SK-N-SH (cell line): ENCODE measurements at regions of chr6 and their contacts with region 1.

Region 1: GRCh38 chr6:153231048-153231646 is 100.1 kb upstream of the RGS17 start:
- DNase-seq: peak; percentile 51
- H3K4me3 ChIP-seq: peak overlapping the region in 1 of 2 experiments; percentile 51; a peak in 1 of 4 replicates
- H3K27ac ChIP-seq: no peak overlapping the region
- H3K4me1 ChIP-seq: peaks cover 0 to 3% of the 10 kb centered on the region in 2 experiments; a peak in 3 of 4 replicates
- H3K27me3 ChIP-seq: no peaks in the 10 kb centered on the region
- CTCF ChIP-seq: peak; percentile 77
- EP300 ChIP-seq: no peak
- RAD21 ChIP-seq: peak; percentile 98

Region 2: GRCh38 chr6:153117986-153118879 is 112.9 kb before region 1 on chr6:
- CTCF ChIA-PET with region 1: no interaction called
- POLR2A ChIA-PET with region 1: no interaction called
- DNase-seq: no peak
- H3K4me3 ChIP-seq: no peak overlapping the region
- H3K27ac ChIP-seq: peak overlapping the region in 1 of 2 experiments; percentile 72; a peak in 2 of 4 replicates
- H3K4me1 ChIP-seq: peaks cover 0 to 5% of the 10 kb centered on the region in 2 experiments; a peak in 1 of 4 replicates
- H3K27me3 ChIP-seq: no peaks in the 10 kb centered on the region
- CTCF ChIP-seq: no peak
- EP300 ChIP-seq: no peak
- RAD21 ChIP-seq: no peak

Region 3: GRCh38 chr6:153210083-153210482 is 21.1 kb before region 1 on chr6:
- CTCF ChIA-PET with region 1: interaction called, 18 read pairs
- POLR2A ChIA-PET with region 1: no interaction called
- DNase-seq: no peak
- H3K4me3 ChIP-seq: no peak overlapping the region
- H3K27ac ChIP-seq: peak overlapping the region in 1 of 2 experiments; percentile 58; a peak in 1 of 4 replicates
- H3K4me1 ChIP-seq: peaks cover 0 to 5% of the 10 kb centered on the region in 2 experiments; a peak in 2 of 4 replicates
- H3K27me3 ChIP-seq: no peaks in the 10 kb centered on the region
- CTCF ChIP-seq: no peak
- EP300 ChIP-seq: no peak
- RAD21 ChIP-seq: no peak

Region 4: DNA sequence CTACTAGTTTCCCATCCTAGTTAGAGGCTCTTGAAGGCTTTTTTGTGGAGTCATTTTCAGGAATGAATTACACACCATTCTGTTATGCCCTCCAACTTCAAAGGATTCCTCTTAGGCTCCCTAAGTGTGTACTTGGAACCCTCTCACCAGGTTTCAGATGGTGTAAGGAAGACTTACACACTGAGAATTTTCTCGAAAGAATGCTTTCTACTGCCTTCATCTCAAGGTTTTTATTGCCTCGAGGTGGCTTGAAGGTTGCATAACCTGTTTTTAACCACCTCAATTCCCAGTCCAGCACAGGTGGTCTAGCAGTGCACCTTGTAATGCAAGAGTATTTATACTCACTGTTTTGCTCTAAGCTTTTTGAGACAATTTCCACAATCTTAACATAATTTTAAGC is 11.6 kb after region 1 on chr6:
- CTCF ChIA-PET with region 1: interaction called, 28 read pairs
- POLR2A ChIA-PET with region 1: no interaction called
- DNase-seq: no peak
- H3K4me3 ChIP-seq: no peak overlapping the region
- H3K27ac ChIP-seq: no peak overlapping the region
- H3K4me1 ChIP-seq: no peaks in the 10 kb centered on the region
- H3K27me3 ChIP-seq: no peaks in the 10 kb centered on the region
- CTCF ChIP-seq: no peak
- EP300 ChIP-seq: no peak
- RAD21 ChIP-seq: no peak

Region 5: DNA sequence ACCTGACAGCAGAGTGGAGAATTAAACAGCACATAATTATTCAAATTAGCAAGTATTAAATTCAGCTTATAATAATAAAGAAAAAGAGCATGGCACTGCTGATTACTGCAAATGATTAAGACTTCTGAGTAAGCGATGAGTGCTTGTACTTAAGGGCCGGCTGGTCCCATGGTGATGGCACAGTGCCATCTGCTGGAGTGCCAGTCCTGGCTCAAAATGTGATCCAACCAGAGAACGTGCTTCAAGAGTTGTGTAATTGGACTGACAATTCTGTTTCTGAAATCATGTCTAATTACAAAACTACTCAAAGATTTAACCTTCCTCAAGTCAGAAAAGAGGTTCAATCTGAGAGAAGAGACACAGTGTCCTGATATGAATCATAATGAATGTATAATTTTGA is 81.5 kb after region 1 on chr6:
- CTCF ChIA-PET with region 1: interaction called, 34 read pairs
- POLR2A ChIA-PET with region 1: no interaction called
- DNase-seq: peak; percentile 75
- H3K4me3 ChIP-seq: no peak overlapping the region
- H3K27ac ChIP-seq: peak overlapping the region in 1 of 2 experiments; percentile 22; a peak in 1 of 4 replicates
- H3K4me1 ChIP-seq: peaks cover 0 to 8% of the 10 kb centered on the region in 2 experiments; a peak in 3 of 4 replicates
- H3K27me3 ChIP-seq: no peaks in the 10 kb centered on the region
- CTCF ChIP-seq: peak; percentile 57
- EP300 ChIP-seq: no peak
- RAD21 ChIP-seq: peak; percentile 88

Region 6: GRCh38 chr6:154039231-154039842 is 808.2 kb after region 1 on chr6 and contains the start of gene OPRM1:
- CTCF ChIA-PET with region 1: interaction called, 52 read pairs
- POLR2A ChIA-PET with region 1: interaction called, 3 read pairs
- DNase-seq: peak; percentile 68
- H3K4me3 ChIP-seq: peak within 1 kb of the TSS in 1 of 2 experiments; percentile 51; a peak in 2 of 4 replicates
- H3K27ac ChIP-seq: peak within 1 kb of the TSS in 1 of 2 experiments; percentile 98; a peak in 2 of 4 replicates
- H3K4me1 ChIP-seq: peaks cover 0 to 5% of the 10 kb centered on the region in 2 experiments; a peak in 2 of 4 replicates
- H3K27me3 ChIP-seq: no peaks in the 10 kb centered on the region
- CTCF ChIP-seq: no peak
- EP300 ChIP-seq: no peak
- RAD21 ChIP-seq: no peak; the same call in 1 of the 2 replicates
- polyA plus RNA-seq, gene OPRM1: 0.15 and 1.0 TPM in 2 replicates

Region 7: DNA sequence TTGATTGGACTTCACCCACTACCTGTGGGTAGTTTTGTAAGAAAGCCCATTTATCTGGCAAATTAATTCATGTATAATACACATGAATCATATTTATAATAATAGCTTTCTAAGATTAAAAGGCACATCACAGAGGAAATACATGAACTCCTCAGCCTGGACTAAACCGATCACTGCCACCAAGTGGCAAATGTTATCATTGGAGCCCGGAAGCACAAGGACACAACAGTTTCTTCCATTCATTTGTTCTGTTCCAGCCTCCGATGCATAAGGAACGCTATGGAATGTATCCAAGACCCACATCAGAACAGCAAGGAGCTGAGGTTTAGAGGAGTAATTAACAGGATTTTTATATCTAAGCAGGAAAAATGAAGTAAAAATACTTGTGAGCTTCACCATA is 1139.4 kb after region 1 on chr6:
- CTCF ChIA-PET with region 1: interaction called, 10 read pairs
- POLR2A ChIA-PET with region 1: no interaction called
- DNase-seq: peak; percentile 52
- H3K4me3 ChIP-seq: no peak overlapping the region
- H3K27ac ChIP-seq: no peak overlapping the region
- H3K4me1 ChIP-seq: no peaks in the 10 kb centered on the region; a peak in 1 of 4 replicates
- H3K27me3 ChIP-seq: no peaks in the 10 kb centered on the region
- CTCF ChIP-seq: peak; percentile 63
- EP300 ChIP-seq: no peak
- RAD21 ChIP-seq: peak; percentile 75